ENCODE measurements at regions of chr20 and their contacts with region 1.

Region 1: GRCh38 chr20:841568-842546 is 8.3 kb downstream of the FAM110A start:
- DNase-seq: peak; percentile 77 to 84
- H3K4me3 ChIP-seq: peak overlapping the region; percentile 77
- H3K27ac ChIP-seq: peak overlapping the region; percentile 58
- H3K4me1 ChIP-seq: peaks cover 33% of the 10 kb centered on the region
- H3K27me3 ChIP-seq: no peaks in the 10 kb centered on the region
- CTCF ChIP-seq: no peak

Region 2: DNA sequence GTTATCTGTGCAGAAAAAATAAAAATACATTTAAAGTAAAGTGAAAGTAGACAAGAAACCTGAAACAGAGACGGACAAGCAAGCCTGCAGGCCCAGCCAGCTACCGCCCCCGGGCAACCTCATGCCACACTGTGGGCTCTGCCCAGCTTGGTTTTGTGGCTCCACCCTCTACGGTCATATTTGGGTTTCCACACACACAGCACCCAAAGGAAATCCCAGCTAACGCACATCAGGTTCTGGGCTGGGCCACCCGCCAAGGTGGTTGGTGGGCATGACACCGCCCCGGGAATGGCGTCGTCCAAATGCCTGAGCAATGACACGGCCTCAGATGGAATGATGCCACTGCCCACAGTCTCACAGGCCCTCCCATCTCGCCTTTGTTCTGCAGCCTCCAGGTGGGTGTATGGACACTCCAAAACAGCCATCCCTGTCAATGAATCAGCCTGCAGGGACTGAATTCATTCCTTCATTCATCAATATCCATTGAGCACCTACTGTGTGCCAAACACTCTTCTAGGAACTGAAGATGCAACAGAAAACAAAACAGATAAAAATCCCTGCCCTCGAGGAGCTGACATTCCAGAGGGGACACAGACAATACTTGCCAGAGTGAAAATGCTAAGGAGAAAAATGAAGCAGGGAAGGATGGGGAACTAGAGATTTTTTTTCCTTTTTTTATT is 14.6 kb after region 1 on chr20:
- CTCF ChIA-PET with region 1: no interaction called
- POLR2A ChIA-PET with region 1: interaction called, 3 read pairs
- intact Hi-C with region 1: loop called (anchors 1 kb)
- DNase-seq: peak; percentile 95 to 99
- H3K4me3 ChIP-seq: peak overlapping the region; percentile 43; the same call in 1 of the 2 replicates
- H3K27ac ChIP-seq: peak overlapping the region; percentile 64
- H3K4me1 ChIP-seq: peaks cover 24% of the 10 kb centered on the region
- H3K27me3 ChIP-seq: no peaks in the 10 kb centered on the region
- CTCF ChIP-seq: no peak

Measured in PC-9 (cell line).